Aorta (tissue), 5 donors: ENCODE measurements at regions of chr17 and their contacts with region 1.

Region 1: GRCh38 chr17:58324409-58325288 is 3.9 kb downstream of the TSPOAP1 start:
- DNase-seq: peak; percentile 67 to 83
- ATAC-seq: peak; percentile 70
- H3K4me3 ChIP-seq: peak overlapping the region; percentile 51 to 53
- H3K27ac ChIP-seq: no peak overlapping the region
- H3K4me1 ChIP-seq: no peaks in the 10 kb centered on the region
- H3K27me3 ChIP-seq: no peaks in the 10 kb centered on the region

Region 2: DNA sequence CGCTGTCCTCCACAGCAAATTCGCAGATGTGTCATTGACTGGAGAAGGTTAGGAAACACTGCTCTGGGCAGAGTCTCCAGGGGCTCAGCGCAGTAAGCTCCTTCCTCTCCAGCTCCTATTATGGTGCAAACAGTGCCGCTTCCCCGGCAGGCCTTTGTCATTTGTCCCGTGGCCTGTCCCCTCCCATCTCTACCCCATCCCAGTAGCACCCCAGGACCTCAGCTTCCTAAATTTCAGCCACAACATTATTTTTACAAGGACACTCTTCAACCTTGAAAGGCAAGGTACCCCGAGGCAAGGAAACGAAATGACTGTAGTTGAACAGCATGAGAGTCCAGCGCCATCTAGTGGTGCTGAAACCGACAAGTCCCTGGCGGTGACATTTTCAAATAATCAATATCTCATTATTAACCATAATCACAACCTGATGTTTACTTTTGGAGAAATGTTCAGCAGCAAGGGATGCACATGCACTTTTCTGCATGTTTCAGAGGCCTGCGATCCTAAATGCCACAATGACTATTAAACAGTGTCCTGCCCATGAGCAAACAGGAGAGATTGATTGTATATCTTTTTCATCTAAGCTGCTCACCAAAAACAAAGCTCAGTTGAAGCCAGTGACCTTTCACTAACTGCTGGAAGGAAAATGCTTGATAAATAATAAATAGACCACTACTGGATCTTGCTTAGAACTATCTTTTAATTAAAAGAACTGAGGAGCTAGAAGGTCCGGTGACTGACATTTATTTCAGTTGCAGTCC is 491.3 kb before region 1 on chr17:
- intact Hi-C with region 1: no loop called
- DNase-seq: peak; percentile 70 to 85
- ATAC-seq: peak; percentile 88
- H3K4me3 ChIP-seq: peak overlapping the region; percentile 37 to 81
- H3K27ac ChIP-seq: peak overlapping the region in 1 of 2 donors; percentile 77
- H3K4me1 ChIP-seq: peaks cover 0 to 2% of the 10 kb centered on the region in 2 donors
- H3K27me3 ChIP-seq: no peaks in the 10 kb centered on the region

Region 3: GRCh38 chr17:58358408-58359172 is 33.9 kb after region 1 on chr17:
- intact Hi-C with region 1: loop called in 1 of 2 experiments (anchors 5 kb)
- DNase-seq: peak in 1 of 2 donors; percentile 26
- ATAC-seq: no peak
- H3K4me3 ChIP-seq: no peak overlapping the region
- H3K27ac ChIP-seq: no peak overlapping the region
- H3K4me1 ChIP-seq: no peaks in the 10 kb centered on the region
- H3K27me3 ChIP-seq: no peaks in the 10 kb centered on the region

Region 4: DNA sequence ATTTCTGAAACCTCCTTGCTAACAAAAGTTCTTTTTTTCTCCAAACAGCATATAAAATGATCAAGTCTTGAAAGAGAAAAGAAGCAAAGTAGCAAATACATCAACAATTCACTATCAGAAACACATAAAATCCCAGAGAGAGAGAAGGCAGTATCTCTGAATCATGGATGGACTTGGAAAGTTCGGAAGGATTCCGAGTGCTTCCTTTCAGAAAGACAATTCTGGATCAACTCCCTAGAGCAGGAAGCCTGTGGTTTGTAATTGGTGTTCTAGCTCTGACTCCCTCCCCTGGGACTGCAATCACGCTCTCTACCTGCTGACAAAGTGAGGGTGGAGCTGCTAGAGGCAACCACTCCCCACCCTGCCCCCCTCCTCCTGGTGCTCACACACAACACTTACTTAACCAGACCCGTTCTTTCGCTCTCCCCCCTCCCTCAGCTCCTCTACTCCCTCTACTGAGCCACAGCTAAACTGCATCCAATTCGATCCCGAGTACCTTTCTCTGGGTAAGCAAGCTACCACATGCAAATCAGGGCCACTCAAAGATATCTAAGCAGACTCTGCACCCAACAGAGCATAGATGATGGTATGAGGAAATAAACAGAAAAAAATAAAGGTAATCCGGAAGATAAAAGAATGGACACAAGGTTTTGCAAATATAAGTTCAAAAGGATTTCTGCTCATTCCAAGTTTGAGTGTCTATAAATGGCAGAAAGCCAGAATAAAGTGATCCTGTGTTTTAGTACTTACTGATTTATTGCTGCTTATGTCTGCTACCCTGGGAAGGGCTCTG is 92.8 kb after region 1 on chr17 and contains the start of gene RNF43:
- intact Hi-C with region 1: loop called in 1 of 2 experiments (anchors 5 kb)
- DNase-seq: peak; percentile 80 to 84
- ATAC-seq: peak; percentile 96
- H3K4me3 ChIP-seq: peak within 1 kb of the TSS in 1 of 2 donors; percentile 16
- H3K27ac ChIP-seq: no peak within 1 kb of the TSS
- H3K4me1 ChIP-seq: no peaks in the 10 kb centered on the region
- H3K27me3 ChIP-seq: no peaks in the 10 kb centered on the region
- total RNA-seq, gene RNF43: 0.68 TPM in 1 of 2 donors, not detected in the other